ENCODE measurements at regions of chr4 and their contacts with region 1.

Region 1: DNA sequence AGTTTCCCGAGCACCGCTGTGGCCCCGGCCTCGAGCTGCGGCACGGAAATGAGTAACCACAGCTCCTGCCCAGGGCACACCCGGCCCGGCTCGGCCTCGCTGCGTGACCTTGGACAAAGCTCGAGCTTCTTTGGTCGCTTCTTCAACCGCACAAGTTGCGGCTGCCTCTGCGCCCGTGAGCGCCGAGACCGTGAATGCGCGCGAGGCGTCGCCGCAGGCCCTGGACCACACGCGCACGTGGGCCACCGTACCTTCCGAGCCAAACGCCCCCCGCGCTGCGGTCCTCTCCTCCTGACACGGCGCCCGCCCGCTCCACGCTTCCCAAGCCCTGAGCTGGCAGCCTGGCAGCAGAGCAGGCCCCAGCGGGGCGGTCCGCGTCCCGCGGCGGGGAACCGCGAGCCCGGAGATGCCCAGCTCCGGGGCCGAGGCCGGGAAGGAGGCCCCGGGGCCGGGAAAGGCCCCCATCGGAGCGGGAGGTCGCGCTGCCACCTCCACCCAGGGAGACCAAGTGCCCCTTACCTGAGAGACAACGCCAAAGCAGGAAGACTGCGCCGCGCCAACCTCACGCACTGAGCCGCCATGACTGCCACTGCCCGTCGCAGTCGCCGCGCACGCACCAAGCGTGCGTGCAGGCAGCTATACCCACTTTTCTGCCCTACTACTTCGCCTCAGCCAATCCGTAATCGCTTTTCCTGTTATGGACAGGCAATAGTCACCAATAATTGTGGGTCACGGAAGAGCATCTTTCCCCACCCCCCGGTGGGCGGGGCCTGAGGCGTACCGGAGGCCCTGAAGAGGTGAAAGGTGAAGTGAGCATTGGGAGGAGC is at the start of gene GRPEL1:
- DNase-seq: peak; percentile 71 to 99 (median 86)
- ATAC-seq: peak; percentile 90
- H3K4me3 ChIP-seq: peak within 1 kb of the TSS; percentile 58
- H3K27ac ChIP-seq: peak within 1 kb of the TSS; percentile 76
- H3K4me1 ChIP-seq: peaks cover 15 to 40% of the 10 kb centered on the region in 2 experiments; a peak in 4 of 5 replicates
- H3K27me3 ChIP-seq: no peaks in the 10 kb centered on the region
- CTCF ChIP-seq: no peak
- EP300 ChIP-seq: no peak
- POLR2A ChIP-seq: peak; percentile 94
- RAD21 ChIP-seq: no peak
- polyA plus RNA-seq, gene GRPEL1: 125 to 192 TPM

Region 2: DNA sequence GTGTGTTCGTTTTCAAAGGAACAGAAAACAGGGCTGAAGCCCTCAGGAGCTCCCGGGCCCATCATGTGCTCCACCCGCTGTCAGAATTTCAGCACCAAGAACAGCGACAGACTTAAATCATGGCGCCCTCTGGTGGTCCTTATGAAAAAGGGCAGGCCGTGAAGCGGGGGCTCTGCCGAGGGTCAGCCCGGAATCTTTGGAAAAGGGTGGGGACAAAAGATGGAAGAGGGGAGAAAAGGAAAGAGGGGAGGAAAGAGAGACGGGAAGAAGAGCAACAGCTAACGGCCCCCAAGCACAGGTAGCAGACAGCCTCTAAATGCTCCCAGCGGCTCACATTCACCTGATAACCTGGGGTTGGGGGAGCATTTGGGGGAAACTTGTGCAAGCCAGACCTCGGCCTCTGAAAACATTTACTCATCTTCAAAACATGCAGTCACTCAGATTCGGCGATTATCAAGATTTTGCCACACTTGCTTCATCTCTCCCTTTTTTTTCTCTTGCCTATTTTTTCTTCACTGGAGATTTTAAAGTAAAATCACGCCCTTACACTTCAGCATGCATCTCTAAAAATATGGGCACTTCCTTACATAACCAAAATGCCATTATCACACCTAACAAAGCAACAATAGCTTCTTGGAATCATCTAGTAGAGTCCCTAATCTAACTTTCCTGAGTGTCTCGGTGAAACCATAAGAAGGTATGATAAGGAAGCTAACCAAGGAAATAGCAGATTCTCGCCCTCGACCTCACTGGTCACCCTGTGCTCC is 520.8 kb before region 1 on chr4:
- CTCF ChIA-PET with region 1: no interaction called
- POLR2A ChIA-PET with region 1: no interaction called
- in situ Hi-C with region 1: no loop called
- intact Hi-C with region 1: loop called (anchors 5 kb)
- DNase-seq: peak; percentile 79 to 84 (median 82)
- ATAC-seq: peak; percentile 87
- H3K4me3 ChIP-seq: no peak overlapping the region
- H3K27ac ChIP-seq: no peak overlapping the region
- H3K4me1 ChIP-seq: no peaks in the 10 kb centered on the region
- H3K27me3 ChIP-seq: peaks cover 0 to 29% of the 10 kb centered on the region in 2 experiments; a peak in 2 of 5 replicates
- CTCF ChIP-seq: peak; percentile 89 to 93 (median 91)
- EP300 ChIP-seq: no peak
- POLR2A ChIP-seq: no peak
- RAD21 ChIP-seq: peak; percentile 54 to 78

Region 3: GRCh38 chr4:6783053-6783981 is 284.3 kb before region 1 on chr4:
- CTCF ChIA-PET with region 1: no interaction called
- POLR2A ChIA-PET with region 1: no interaction called
- in situ Hi-C with region 1: no loop called
- intact Hi-C with region 1: loop called (anchors 2 kb)
- DNase-seq: peak; percentile 94 to 97 (median 96)
- ATAC-seq: peak; percentile 86
- H3K4me3 ChIP-seq: peak overlapping the region; percentile 95
- H3K27ac ChIP-seq: peak overlapping the region; percentile 97
- H3K4me1 ChIP-seq: peaks cover 42 to 50% of the 10 kb centered on the region in 2 experiments
- H3K27me3 ChIP-seq: no peaks in the 10 kb centered on the region
- CTCF ChIP-seq: peak; percentile 38 to 60 (median 55); a peak in 4 of 6 replicates
- EP300 ChIP-seq: 0 out of 2 replicates have a peak, but pooled peaks have one; percentile 10
- POLR2A ChIP-seq: peak; percentile 79
- RAD21 ChIP-seq: peak; percentile 49 to 64

Region 4: GRCh38 chr4:6854098-6854744 is 213.4 kb before region 1 on chr4:
- CTCF ChIA-PET with region 1: no interaction called
- POLR2A ChIA-PET with region 1: no interaction called
- in situ Hi-C with region 1: no loop called
- intact Hi-C with region 1: no loop called
- DNase-seq: no peak
- ATAC-seq: no peak
- H3K4me3 ChIP-seq: no peak overlapping the region
- H3K27ac ChIP-seq: no peak overlapping the region
- H3K4me1 ChIP-seq: peaks cover 0 to 13% of the 10 kb centered on the region in 2 experiments; a peak in 3 of 5 replicates
- H3K27me3 ChIP-seq: no peaks in the 10 kb centered on the region
- CTCF ChIP-seq: no peak
- EP300 ChIP-seq: no peak
- POLR2A ChIP-seq: 0 out of 2 replicates have a peak, but pooled peaks have one; percentile 12
- RAD21 ChIP-seq: no peak

Region 5: DNA sequence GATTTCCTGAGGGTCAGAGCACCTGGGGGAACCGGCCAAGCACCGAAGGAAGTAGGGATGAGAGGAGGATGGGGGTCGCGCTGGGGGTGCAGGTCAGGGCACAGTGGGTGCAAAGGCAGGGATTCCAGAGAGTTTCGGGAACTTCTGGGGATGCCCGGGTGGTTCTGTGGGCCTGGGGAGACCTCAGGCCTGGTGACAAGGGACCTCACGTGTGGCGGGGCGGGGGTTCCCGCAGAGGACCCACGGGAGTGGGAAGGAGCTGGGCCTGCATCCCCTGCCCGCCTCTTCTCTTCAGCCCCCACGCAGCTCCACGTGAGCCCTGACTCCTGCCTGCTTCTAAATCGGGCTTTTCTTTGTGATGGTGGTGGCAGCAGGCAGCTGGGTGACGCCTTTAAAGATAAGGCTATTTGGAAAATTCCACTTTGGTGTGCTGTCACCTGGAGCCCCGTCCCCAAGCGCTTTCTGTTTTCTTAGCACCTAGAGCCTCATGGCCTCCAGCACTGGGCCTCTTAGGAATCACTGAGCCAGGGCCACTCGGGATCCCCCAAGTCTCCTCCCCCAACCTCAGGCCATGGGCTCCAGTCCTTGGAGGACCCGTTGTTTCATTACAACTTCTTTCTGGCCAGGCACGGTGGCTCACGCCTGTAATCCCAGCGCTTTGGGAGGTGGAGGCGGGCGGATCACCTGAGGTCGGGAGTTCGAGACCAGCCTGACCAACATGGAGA is 165.2 kb before region 1 on chr4:
- CTCF ChIA-PET with region 1: interaction called, 14 read pairs
- POLR2A ChIA-PET with region 1: interaction called, 4 read pairs
- in situ Hi-C with region 1: loop called (anchors 5 kb)
- intact Hi-C with region 1: no loop called
- DNase-seq: peak in 1 of 4 experiments; percentile 23
- ATAC-seq: peak; percentile 14; the same call in 1 of the 3 replicates
- H3K4me3 ChIP-seq: no peak overlapping the region
- H3K27ac ChIP-seq: no peak overlapping the region
- H3K4me1 ChIP-seq: peaks cover 11 to 36% of the 10 kb centered on the region in 2 experiments; a peak in 4 of 5 replicates
- H3K27me3 ChIP-seq: no peaks in the 10 kb centered on the region
- CTCF ChIP-seq: no peak
- EP300 ChIP-seq: no peak
- POLR2A ChIP-seq: no peak
- RAD21 ChIP-seq: no peak

Region 6: GRCh38 chr4:6974138-6974848 is 93.4 kb before region 1 on chr4:
- CTCF ChIA-PET with region 1: no interaction called
- POLR2A ChIA-PET with region 1: no interaction called
- in situ Hi-C with region 1: no loop called
- intact Hi-C with region 1: loop called (anchors 1 kb)
- DNase-seq: peak; percentile 78 to 88 (median 82)
- ATAC-seq: peak; percentile 97
- H3K4me3 ChIP-seq: no peak overlapping the region
- H3K27ac ChIP-seq: no peak overlapping the region
- H3K4me1 ChIP-seq: peaks cover 3 to 14% of the 10 kb centered on the region in 2 experiments
- H3K27me3 ChIP-seq: no peaks in the 10 kb centered on the region
- CTCF ChIP-seq: peak; percentile 85 to 95 (median 86)
- EP300 ChIP-seq: no peak
- POLR2A ChIP-seq: no peak
- RAD21 ChIP-seq: peak; percentile 52 to 74

Region 7: GRCh38 chr4:7031526-7032449 is 35.9 kb before region 1 on chr4:
- CTCF ChIA-PET with region 1: no interaction called
- POLR2A ChIA-PET with region 1: interaction called, 3 read pairs
- in situ Hi-C with region 1: no loop called
- intact Hi-C with region 1: loop called (anchors 1 kb)
- DNase-seq: peak; percentile 87 to 93 (median 90)
- ATAC-seq: peak; percentile 94
- H3K4me3 ChIP-seq: no peak overlapping the region
- H3K27ac ChIP-seq: peak overlapping the region; percentile 80
- H3K4me1 ChIP-seq: peaks cover 14 to 35% of the 10 kb centered on the region in 2 experiments
- H3K27me3 ChIP-seq: no peaks in the 10 kb centered on the region
- CTCF ChIP-seq: peak; percentile 42 to 55 (median 50)
- EP300 ChIP-seq: peak; percentile 73; the same call in 1 of the 2 replicates
- POLR2A ChIP-seq: 0 out of 2 replicates have a peak, but pooled peaks have one; percentile 39
- RAD21 ChIP-seq: peak; percentile 7 to 32; a peak in 2 of 4 replicates

Region 8: GRCh38 chr4:7055111-7055989 is 12.3 kb before region 1 on chr4:
- CTCF ChIA-PET with region 1: no interaction called
- POLR2A ChIA-PET with region 1: interaction called, 24 read pairs
- in situ Hi-C with region 1: no loop called
- intact Hi-C with region 1: no loop called
- DNase-seq: no peak
- ATAC-seq: no peak
- H3K4me3 ChIP-seq: no peak overlapping the region
- H3K27ac ChIP-seq: no peak overlapping the region
- H3K4me1 ChIP-seq: peaks cover 4 to 37% of the 10 kb centered on the region in 2 experiments; a peak in 4 of 5 replicates
- H3K27me3 ChIP-seq: no peaks in the 10 kb centered on the region
- CTCF ChIP-seq: no peak
- EP300 ChIP-seq: no peak
- POLR2A ChIP-seq: no peak
- RAD21 ChIP-seq: no peak

Region 9: DNA sequence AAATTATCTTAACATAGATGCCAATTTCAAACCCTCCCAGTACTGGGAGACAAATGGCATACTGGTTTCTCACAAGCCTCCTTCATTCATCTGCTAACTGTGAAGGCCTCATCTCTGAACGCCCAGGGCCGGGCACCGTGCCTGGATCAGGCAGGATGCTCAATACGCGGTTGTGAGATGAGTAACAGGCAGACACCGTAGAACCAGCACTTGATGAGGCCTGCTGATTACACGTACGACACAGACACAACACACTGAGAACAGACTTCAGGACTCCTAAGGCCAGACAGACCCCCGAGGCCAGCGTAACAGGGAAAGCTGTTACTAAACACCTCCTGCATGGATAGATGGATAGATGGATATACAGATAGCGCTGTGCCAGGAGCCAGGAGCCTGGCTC is 717.4 kb after region 1 on chr4:
- CTCF ChIA-PET with region 1: no interaction called
- POLR2A ChIA-PET with region 1: no interaction called
- in situ Hi-C with region 1: no loop called
- intact Hi-C with region 1: no loop called
- DNase-seq: no peak
- ATAC-seq: no peak
- H3K4me3 ChIP-seq: no peak overlapping the region
- H3K27ac ChIP-seq: no peak overlapping the region
- H3K4me1 ChIP-seq: no peaks in the 10 kb centered on the region; a peak in 2 of 5 replicates
- H3K27me3 ChIP-seq: peaks cover 5 to 40% of the 10 kb centered on the region in 2 experiments; a peak in 4 of 5 replicates
- CTCF ChIP-seq: no peak
- EP300 ChIP-seq: no peak
- POLR2A ChIP-seq: no peak
- RAD21 ChIP-seq: no peak

Measured in K562 (cell line).